ENCODE measurements at regions of chr11 and their contacts with region 1.

Region 1: GRCh38 chr11:60899046-60899936 is 7.1 kb downstream of the PRPF19 start:
- DNase-seq: peak in 4 of 5 donors; percentile 30 to 49 (median 44)
- H3K4me3 ChIP-seq: no peak overlapping the region
- H3K4me3 Mint-ChIP-seq: no peak overlapping the region
- H3K27ac ChIP-seq: no peak overlapping the region
- H3K27ac Mint-ChIP-seq: peak overlapping the region in 3 of 7 donors; percentile 13 to 49 (median 24)
- H3K4me1 ChIP-seq: peaks cover 10% of the 10 kb centered on the region
- H3K4me1 Mint-ChIP-seq: peaks cover 7 to 16% (median 11%) of the 10 kb centered on the region in 4 donors
- H3K27me3 ChIP-seq: no peaks in the 10 kb centered on the region
- H3K27me3 Mint-ChIP-seq: no peaks in the 10 kb centered on the region

Region 2: DNA sequence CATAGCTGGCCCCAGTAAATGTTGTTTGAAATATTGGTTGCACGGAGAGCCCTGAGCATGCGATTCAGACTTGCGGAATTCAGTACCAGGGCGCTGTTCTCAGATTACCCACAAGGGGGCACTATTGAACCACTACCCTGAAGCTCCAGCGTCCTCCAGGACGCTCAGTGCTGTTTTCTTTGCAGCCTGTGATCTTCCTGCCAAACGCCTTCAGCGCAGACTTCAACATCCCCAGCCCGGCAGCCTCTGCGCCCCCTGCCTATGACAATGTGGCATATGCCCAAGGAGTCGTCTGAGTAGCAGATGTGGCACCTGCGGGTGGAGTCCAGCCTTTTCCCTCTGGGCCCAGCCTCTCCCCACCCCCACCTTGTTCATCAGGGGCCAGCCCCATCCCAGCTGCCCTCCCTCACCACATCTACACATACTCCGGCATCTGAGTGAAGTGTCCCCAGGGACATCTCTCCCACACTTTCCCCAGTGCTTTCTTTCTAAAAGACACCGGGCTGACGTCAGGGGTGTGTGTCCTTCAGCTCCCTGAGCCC is 123.8 kb before region 1 on chr11:
- CTCF ChIA-PET with region 1: interaction called, 3 read pairs
- POLR2A ChIA-PET with region 1: no interaction called
- intact Hi-C with region 1: loop called (anchors 2 kb)
- DNase-seq: peak; percentile 77 to 80 (median 78)
- H3K4me3 ChIP-seq: no peak overlapping the region
- H3K4me3 Mint-ChIP-seq: peak overlapping the region in 2 of 8 donors; percentile 23 to 54
- H3K27ac ChIP-seq: no peak overlapping the region
- H3K27ac Mint-ChIP-seq: peak overlapping the region in 4 of 7 donors; percentile 26 to 87 (median 66)
- H3K4me1 ChIP-seq: no peaks in the 10 kb centered on the region
- H3K4me1 Mint-ChIP-seq: peaks cover 5 to 16% (median 8%) of the 10 kb centered on the region in 4 donors
- H3K27me3 ChIP-seq: no peaks in the 10 kb centered on the region
- H3K27me3 Mint-ChIP-seq: peaks cover 3 to 4% of the 10 kb centered on the region in 2 donors

Region 3: DNA sequence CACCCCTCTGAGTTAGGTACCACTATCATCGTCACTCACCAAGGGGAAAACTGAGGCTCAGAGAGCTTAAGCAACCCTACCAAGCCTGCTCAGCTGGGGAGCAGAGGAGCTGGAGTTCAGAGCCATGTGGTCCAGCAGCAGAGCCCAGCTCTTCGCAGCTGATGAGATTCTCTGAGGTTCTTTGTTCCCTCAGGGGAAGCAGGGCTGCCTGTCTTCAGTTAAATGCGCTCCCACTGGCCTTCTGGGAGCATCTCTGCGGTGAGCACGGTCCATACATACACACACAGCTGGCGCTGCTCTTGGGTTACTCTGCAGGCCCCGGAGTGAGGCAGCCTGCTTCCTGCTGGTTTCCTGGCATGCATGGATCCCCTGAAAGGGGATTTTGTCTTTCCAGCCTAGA is 38.3 kb before region 1 on chr11:
- CTCF ChIA-PET with region 1: interaction called, 10 read pairs
- POLR2A ChIA-PET with region 1: no interaction called
- intact Hi-C with region 1: no loop called
- DNase-seq: no peak
- H3K4me3 ChIP-seq: no peak overlapping the region
- H3K4me3 Mint-ChIP-seq: no peak overlapping the region
- H3K27ac ChIP-seq: no peak overlapping the region
- H3K27ac Mint-ChIP-seq: peak overlapping the region in 1 of 7 donors; percentile 37
- H3K4me1 ChIP-seq: peaks cover 13% of the 10 kb centered on the region
- H3K4me1 Mint-ChIP-seq: peaks cover 8 to 21% (median 14%) of the 10 kb centered on the region in 4 donors
- H3K27me3 ChIP-seq: no peaks in the 10 kb centered on the region
- H3K27me3 Mint-ChIP-seq: no peaks in the 10 kb centered on the region

Region 4: DNA sequence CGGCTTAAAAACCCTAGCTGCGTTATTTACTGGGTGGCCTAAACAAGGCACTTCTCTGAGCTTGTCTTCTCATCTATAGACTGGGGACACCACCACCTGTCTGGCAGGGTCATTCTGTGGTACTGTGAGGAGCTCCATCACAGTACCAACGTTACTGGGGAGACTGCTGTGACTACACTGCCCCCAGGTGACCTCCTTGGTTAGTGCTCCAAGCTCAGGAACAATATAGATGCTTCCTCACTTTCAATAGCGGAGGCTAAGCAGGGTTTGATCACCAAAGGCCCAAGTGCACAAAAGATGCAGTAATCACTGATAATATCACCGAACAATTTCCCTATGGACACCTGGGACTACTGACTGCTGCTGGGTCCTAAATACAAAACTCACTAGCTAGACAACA is 11.7 kb before region 1 on chr11:
- CTCF ChIA-PET with region 1: interaction called, 19 read pairs
- POLR2A ChIA-PET with region 1: interaction called, 3 read pairs
- intact Hi-C with region 1: no loop called
- DNase-seq: peak in 2 of 5 donors; percentile 14 to 31
- H3K4me3 ChIP-seq: no peak overlapping the region
- H3K4me3 Mint-ChIP-seq: no peak overlapping the region
- H3K27ac ChIP-seq: no peak overlapping the region
- H3K27ac Mint-ChIP-seq: peak overlapping the region in 1 of 7 donors; percentile 44
- H3K4me1 ChIP-seq: no peaks in the 10 kb centered on the region
- H3K4me1 Mint-ChIP-seq: peaks cover 0 to 10% (median 8%) of the 10 kb centered on the region in 4 donors
- H3K27me3 ChIP-seq: no peaks in the 10 kb centered on the region
- H3K27me3 Mint-ChIP-seq: no peaks in the 10 kb centered on the region

Measured in CD4-positive, alpha-beta memory T cell (primary cell).